ENCODE measurements at regions of chr22 and their contacts with region 1.

Region 1: GRCh38 chr22:49305214-49305909 is 522.3 kb downstream of the BRD1 start:
- DNase-seq: peak; percentile 64
- H3K4me3 ChIP-seq: no peak overlapping the region
- H3K27ac ChIP-seq: peak overlapping the region; percentile 63
- H3K4me1 ChIP-seq: peaks cover 9% of the 10 kb centered on the region
- H3K27me3 ChIP-seq: no peaks in the 10 kb centered on the region
- CTCF ChIP-seq: peak; percentile 97

Region 2: GRCh38 chr22:48574776-48575565 is 730.4 kb before region 1 on chr22:
- CTCF ChIA-PET with region 1: no interaction called
- POLR2A ChIA-PET with region 1: no interaction called
- intact Hi-C with region 1: loop called (anchors 5 kb)
- DNase-seq: peak; percentile 87
- H3K4me3 ChIP-seq: peak overlapping the region; percentile 61
- H3K27ac ChIP-seq: no peak overlapping the region
- H3K4me1 ChIP-seq: peaks cover 10% of the 10 kb centered on the region
- H3K27me3 ChIP-seq: no peaks in the 10 kb centered on the region
- CTCF ChIP-seq: peak; percentile 61

Region 3: GRCh38 chr22:48943567-48944432 is 361.6 kb before region 1 on chr22:
- CTCF ChIA-PET with region 1: no interaction called
- POLR2A ChIA-PET with region 1: no interaction called
- intact Hi-C with region 1: loop called (anchors 10 kb)
- DNase-seq: peak; percentile 64
- H3K4me3 ChIP-seq: no peak overlapping the region
- H3K27ac ChIP-seq: no peak overlapping the region
- H3K4me1 ChIP-seq: no peaks in the 10 kb centered on the region
- H3K27me3 ChIP-seq: no peaks in the 10 kb centered on the region
- CTCF ChIP-seq: peak; percentile 69

Region 4: DNA sequence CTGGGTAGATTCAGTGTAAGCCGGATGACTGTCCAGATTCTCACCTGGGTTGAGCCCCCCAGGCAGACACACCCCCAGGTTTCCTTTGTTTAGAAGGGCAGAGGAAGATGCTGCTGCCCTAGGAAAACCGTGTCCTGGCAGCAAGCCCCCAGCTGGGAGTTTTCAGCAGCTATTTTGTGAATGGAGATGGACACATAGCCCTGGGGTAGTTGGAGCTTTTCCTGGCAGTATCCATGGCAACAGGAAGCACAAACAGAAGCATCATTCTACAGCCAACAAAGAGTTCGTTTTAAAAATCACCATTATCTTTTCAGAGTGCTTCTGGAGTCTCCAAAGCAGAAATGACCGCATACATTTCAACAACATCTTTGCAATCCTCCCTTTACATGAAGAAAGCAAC is 276.8 kb after region 1 on chr22:
- CTCF ChIA-PET with region 1: no interaction called
- POLR2A ChIA-PET with region 1: no interaction called
- intact Hi-C with region 1: no loop called
- DNase-seq: no peak
- H3K4me3 ChIP-seq: no peak overlapping the region
- H3K27ac ChIP-seq: no peak overlapping the region
- H3K4me1 ChIP-seq: no peaks in the 10 kb centered on the region
- H3K27me3 ChIP-seq: no peaks in the 10 kb centered on the region
- CTCF ChIP-seq: no peak

Measured in A673 (cell line).